ENCODE measurements at regions of chr16 and their contacts with region 1.

Region 1: GRCh38 chr16:66830422-66831404 is at the start of gene NAE1:
- DNase-seq: no peak
- H3K4me3 ChIP-seq: peak within 1 kb of the TSS; percentile 60 to 91 (median 86)
- H3K27ac ChIP-seq: peak within 1 kb of the TSS; percentile 81 to 96 (median 92)
- H3K4me1 ChIP-seq: peaks cover 6 to 26% (median 13%) of the 10 kb centered on the region in 3 donors
- H3K27me3 ChIP-seq: no peaks in the 10 kb centered on the region
- CTCF ChIP-seq: peak; percentile 94 to 98 (median 97)
- POLR2A ChIP-seq: peak in 2 of 4 donors; percentile 86 to 90
- total RNA-seq, gene NAE1: 31.4 to 74.7 (median 45.7) TPM

Region 2: GRCh38 chr16:66869424-66869823 is 38.7 kb after region 1 on chr16:
- intact Hi-C with region 1: loop called (anchors 5 kb)
- DNase-seq: no peak
- H3K4me3 ChIP-seq: no peak overlapping the region
- H3K27ac ChIP-seq: no peak overlapping the region
- H3K4me1 ChIP-seq: peaks cover 9 to 25% (median 14%) of the 10 kb centered on the region in 3 donors
- H3K27me3 ChIP-seq: no peaks in the 10 kb centered on the region
- CTCF ChIP-seq: no peak
- POLR2A ChIP-seq: no peak

Region 3: GRCh38 chr16:66880288-66881013 is 49.7 kb after region 1 on chr16 and contains the start of gene PDP2:
- intact Hi-C with region 1: no loop called
- DNase-seq: peak; percentile 75
- H3K4me3 ChIP-seq: peak within 1 kb of the TSS; percentile 80 to 89 (median 85)
- H3K27ac ChIP-seq: peak within 1 kb of the TSS; percentile 68 to 88 (median 80)
- H3K4me1 ChIP-seq: peaks cover 0 to 26% (median 10%) of the 10 kb centered on the region in 3 donors
- H3K27me3 ChIP-seq: no peaks in the 10 kb centered on the region
- CTCF ChIP-seq: no peak
- POLR2A ChIP-seq: peak in 2 of 4 donors; percentile 45 to 78
- total RNA-seq, gene PDP2: 4.1 to 12.9 (median 9.4) TPM